ENCODE measurements at regions of chr16 and their contacts with region 1.

Region 1: GRCh38 chr16:24810951-24811843 is 34.6 kb upstream of the SLC5A11 start:
- DNase-seq: no peak
- ATAC-seq: peak in 2 of 4 donors; percentile 29 to 34
- H3K4me3 ChIP-seq: no peak overlapping the region
- H3K27ac ChIP-seq: no peak overlapping the region
- H3K4me1 ChIP-seq: no peaks in the 10 kb centered on the region
- H3K27me3 ChIP-seq: no peaks in the 10 kb centered on the region
- CTCF ChIP-seq: no peak

Region 2: DNA sequence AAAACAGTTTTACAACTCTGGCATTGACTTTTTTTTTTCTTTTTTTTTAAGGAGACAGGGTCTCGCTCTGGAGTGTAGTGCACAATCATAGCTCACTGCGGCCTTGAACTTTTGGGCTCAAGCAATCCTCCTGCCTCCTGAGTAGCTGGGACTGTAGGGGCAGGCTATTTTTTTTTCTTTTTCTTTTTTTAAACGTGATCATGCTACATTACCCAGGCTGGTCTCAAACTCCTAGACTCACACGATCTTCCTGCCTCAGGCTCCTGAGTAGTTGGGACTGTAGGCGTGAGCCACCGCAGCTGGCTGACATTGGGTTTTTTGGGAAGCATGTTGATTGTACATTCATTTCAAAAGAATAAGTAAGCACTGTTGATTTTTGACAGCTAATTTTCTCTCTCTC is 49.7 kb before region 1 on chr16:
- intact Hi-C with region 1: no loop called
- DNase-seq: no peak
- ATAC-seq: no peak
- H3K4me3 ChIP-seq: no peak overlapping the region
- H3K27ac ChIP-seq: peak overlapping the region; percentile 11
- H3K4me1 ChIP-seq: peaks cover 28% of the 10 kb centered on the region
- H3K27me3 ChIP-seq: no peaks in the 10 kb centered on the region
- CTCF ChIP-seq: no peak

Region 3: GRCh38 chr16:24858219-24859041 is 47.2 kb after region 1 on chr16:
- intact Hi-C with region 1: no loop called
- DNase-seq: peak in 1 of 2 donors; percentile 23
- ATAC-seq: no peak
- H3K4me3 ChIP-seq: no peak overlapping the region
- H3K27ac ChIP-seq: no peak overlapping the region
- H3K4me1 ChIP-seq: no peaks in the 10 kb centered on the region
- H3K27me3 ChIP-seq: peaks cover 0 to 1% (median 0%) of the 10 kb centered on the region in 3 donors
- CTCF ChIP-seq: no peak

Region 4: GRCh38 chr16:24943473-24943872 is 132.3 kb after region 1 on chr16:
- intact Hi-C with region 1: loop called in 1 of 2 experiments (anchors 5 kb)
- DNase-seq: no peak
- ATAC-seq: no peak
- H3K4me3 ChIP-seq: no peak overlapping the region
- H3K27ac ChIP-seq: no peak overlapping the region
- H3K4me1 ChIP-seq: no peaks in the 10 kb centered on the region
- H3K27me3 ChIP-seq: no peaks in the 10 kb centered on the region
- CTCF ChIP-seq: no peak

Region 5: DNA sequence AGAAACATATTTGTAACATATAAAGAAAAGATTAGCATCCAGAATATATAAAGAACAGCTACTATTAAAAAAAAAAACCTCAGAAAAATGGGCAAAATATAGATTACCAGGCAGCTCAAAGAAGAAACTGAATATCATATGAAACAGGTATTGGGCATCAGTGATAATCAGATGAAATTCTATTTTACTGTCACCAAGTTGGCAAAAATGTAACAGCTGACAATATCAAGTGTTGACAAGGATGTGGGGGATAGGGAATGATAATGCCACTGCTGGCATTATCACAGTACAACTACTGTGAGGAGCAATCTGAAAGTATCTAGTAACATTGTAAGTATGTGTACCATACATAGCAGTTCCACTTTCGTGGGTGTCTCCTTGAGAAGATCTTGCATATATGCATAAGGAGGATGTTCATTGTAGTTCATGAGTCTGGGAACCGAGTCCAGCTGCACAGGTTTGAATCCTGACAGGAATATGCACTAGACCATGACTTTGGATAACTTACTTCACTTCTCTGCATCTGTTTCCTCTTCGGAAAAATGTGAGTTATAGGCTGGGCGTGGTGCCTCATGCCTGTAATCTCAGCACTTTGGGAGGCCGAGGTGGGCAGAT is 350.7 kb after region 1 on chr16:
- intact Hi-C with region 1: loop called in 1 of 2 experiments (anchors 10 kb)
- DNase-seq: no peak
- ATAC-seq: no peak
- H3K4me3 ChIP-seq: no peak overlapping the region
- H3K27ac ChIP-seq: no peak overlapping the region
- H3K4me1 ChIP-seq: no peaks in the 10 kb centered on the region
- H3K27me3 ChIP-seq: no peaks in the 10 kb centered on the region
- CTCF ChIP-seq: no peak

Measured in psoas muscle (tissue), 8 donors.